K562 (cell line): ENCODE measurements at regions of chr22 and their contacts with region 1.

Region 1: GRCh38 chr22:23240639-23241389 is 60.5 kb downstream of the BCR start:
- DNase-seq: peak; percentile 64 to 89 (median 66)
- ATAC-seq: peak; percentile 36
- H3K4me3 ChIP-seq: no peak overlapping the region
- H3K27ac ChIP-seq: no peak overlapping the region
- H3K4me1 ChIP-seq: peaks cover 22 to 44% of the 10 kb centered on the region in 2 experiments
- H3K27me3 ChIP-seq: no peaks in the 10 kb centered on the region
- CTCF ChIP-seq: no peak
- EP300 ChIP-seq: no peak
- POLR2A ChIP-seq: no peak
- RAD21 ChIP-seq: no peak

Region 2: DNA sequence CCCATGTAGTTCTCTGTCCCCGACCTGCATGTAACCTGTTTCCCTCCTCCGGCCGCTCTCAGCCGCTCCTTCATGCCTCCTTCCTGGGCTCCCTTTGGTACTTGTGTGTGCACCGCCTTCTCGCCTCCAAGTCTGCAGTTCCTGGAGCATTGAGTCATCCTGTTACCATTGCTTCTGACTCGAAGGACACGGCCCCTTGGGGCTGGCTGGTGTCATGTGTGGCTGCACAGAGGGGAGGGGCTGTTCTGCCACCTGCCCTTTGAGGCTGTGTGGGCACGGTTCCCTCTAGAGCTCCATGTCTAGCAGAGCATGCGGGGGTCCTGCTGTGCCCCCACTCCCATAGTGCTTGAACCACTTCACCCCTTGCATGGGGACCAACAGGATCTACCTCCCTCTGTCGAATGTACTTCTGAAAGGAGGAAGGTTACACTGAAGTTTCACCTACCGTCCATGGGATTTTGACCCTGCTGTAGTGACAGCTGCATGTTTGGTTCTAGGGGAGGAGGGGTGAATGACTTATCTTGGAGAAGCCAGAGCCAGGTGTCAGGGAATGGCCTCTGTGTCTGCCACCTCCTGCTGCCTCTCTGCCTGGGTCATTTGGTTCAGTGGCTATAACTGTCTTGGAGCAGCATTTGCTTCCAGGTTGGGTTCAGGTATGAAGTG is 20.9 kb before region 1 on chr22:
- CTCF ChIA-PET with region 1: no interaction called
- POLR2A ChIA-PET with region 1: interaction called, 3,476 read pairs
- in situ Hi-C with region 1: no loop called
- intact Hi-C with region 1: no loop called
- DNase-seq: peak in 2 of 4 experiments; percentile 90 to 94
- ATAC-seq: peak; percentile 54
- H3K4me3 ChIP-seq: no peak overlapping the region
- H3K27ac ChIP-seq: peak overlapping the region; percentile 6; the same call in 2 of the 3 replicates
- H3K4me1 ChIP-seq: peaks cover 77 to 78% of the 10 kb centered on the region in 2 experiments
- H3K27me3 ChIP-seq: no peaks in the 10 kb centered on the region
- CTCF ChIP-seq: no peak
- EP300 ChIP-seq: no peak
- POLR2A ChIP-seq: no peak
- RAD21 ChIP-seq: no peak

Region 3: GRCh38 chr22:23225724-23226496 is 14.9 kb before region 1 on chr22:
- CTCF ChIA-PET with region 1: no interaction called
- POLR2A ChIA-PET with region 1: interaction called, 3,476 read pairs
- in situ Hi-C with region 1: no loop called
- intact Hi-C with region 1: loop called (anchors 2 kb)
- DNase-seq: peak in 3 of 4 experiments; percentile 59 to 72 (median 59)
- ATAC-seq: no peak
- H3K4me3 ChIP-seq: no peak overlapping the region
- H3K27ac ChIP-seq: no peak overlapping the region
- H3K4me1 ChIP-seq: peaks cover 48 to 50% of the 10 kb centered on the region in 2 experiments
- H3K27me3 ChIP-seq: no peaks in the 10 kb centered on the region
- CTCF ChIP-seq: no peak
- EP300 ChIP-seq: no peak
- POLR2A ChIP-seq: no peak
- RAD21 ChIP-seq: no peak

Region 4: DNA sequence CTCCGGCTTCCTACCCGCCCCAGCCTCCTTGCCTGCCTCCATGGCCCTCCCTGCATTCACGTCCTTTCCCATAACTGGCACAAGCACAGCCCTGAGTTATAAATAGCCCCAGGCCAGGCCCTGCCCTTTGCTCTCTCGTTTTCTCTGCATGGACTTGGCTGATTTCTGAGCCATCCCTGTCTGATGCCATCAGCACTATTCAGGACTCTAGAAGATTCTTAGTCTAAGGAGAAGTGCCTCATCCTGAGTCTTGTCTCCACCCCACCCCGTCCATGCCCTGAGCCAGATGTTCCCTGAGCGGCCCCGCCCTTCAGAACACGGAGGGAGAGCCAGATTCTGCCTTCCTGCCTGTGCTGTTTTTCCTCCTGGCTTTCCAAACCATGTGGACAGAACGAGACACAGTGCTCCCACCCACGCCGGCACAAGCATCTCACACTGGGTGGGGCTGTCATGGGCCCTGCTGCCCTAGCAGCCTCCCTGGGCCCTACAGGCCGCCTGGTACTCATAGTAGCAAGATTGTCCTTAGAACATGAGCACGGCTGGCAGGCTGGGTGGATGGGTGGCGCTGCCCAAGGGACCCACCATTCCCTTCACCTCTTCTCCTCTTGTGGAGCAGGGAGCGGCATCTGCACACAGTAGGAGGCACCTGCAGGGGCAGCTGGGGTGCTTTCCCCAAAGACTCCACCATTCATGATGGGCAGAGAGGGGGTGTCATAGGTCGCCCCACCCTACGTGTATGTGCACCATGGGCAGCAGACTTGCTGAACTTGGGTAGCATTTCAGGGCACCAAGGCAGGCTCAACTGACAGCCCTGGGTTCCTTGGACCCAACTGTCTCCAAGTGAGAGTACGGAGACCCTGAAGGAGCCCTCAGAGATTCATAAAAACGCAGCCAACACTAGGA is 16.4 kb after region 1 on chr22:
- CTCF ChIA-PET with region 1: no interaction called
- POLR2A ChIA-PET with region 1: interaction called, 351 read pairs
- in situ Hi-C with region 1: no loop called
- intact Hi-C with region 1: no loop called
- DNase-seq: peak in 3 of 4 experiments; percentile 57 to 70 (median 69)
- ATAC-seq: no peak
- H3K4me3 ChIP-seq: no peak overlapping the region
- H3K27ac ChIP-seq: no peak overlapping the region
- H3K4me1 ChIP-seq: peaks cover 0 to 29% of the 10 kb centered on the region in 2 experiments; a peak in 2 of 5 replicates
- H3K27me3 ChIP-seq: no peaks in the 10 kb centered on the region
- CTCF ChIP-seq: no peak
- EP300 ChIP-seq: no peak
- POLR2A ChIP-seq: no peak
- RAD21 ChIP-seq: no peak

Region 5: GRCh38 chr22:23270212-23270733 is 29.5 kb after region 1 on chr22:
- CTCF ChIA-PET with region 1: interaction called, 3 read pairs
- POLR2A ChIA-PET with region 1: interaction called, 11 read pairs
- in situ Hi-C with region 1: no loop called
- intact Hi-C with region 1: no loop called
- DNase-seq: peak in 3 of 4 experiments; percentile 61 to 82 (median 77)
- ATAC-seq: peak; percentile 31
- H3K4me3 ChIP-seq: no peak overlapping the region
- H3K27ac ChIP-seq: no peak overlapping the region
- H3K4me1 ChIP-seq: peaks cover 4 to 34% of the 10 kb centered on the region in 2 experiments; a peak in 4 of 5 replicates
- H3K27me3 ChIP-seq: no peaks in the 10 kb centered on the region
- CTCF ChIP-seq: peak in 2 of 3 experiments; percentile 75 to 87; a peak in 4 of 6 replicates
- EP300 ChIP-seq: no peak
- POLR2A ChIP-seq: no peak
- RAD21 ChIP-seq: peak in 1 of 2 experiments; percentile 82; a peak in 2 of 4 replicates

Region 6: GRCh38 chr22:23376256-23376655 is 135.4 kb after region 1 on chr22:
- CTCF ChIA-PET with region 1: no interaction called
- POLR2A ChIA-PET with region 1: no interaction called
- in situ Hi-C with region 1: no loop called
- intact Hi-C with region 1: no loop called
- DNase-seq: peak; percentile 56 to 65 (median 60)
- ATAC-seq: peak; percentile 94
- H3K4me3 ChIP-seq: no peak overlapping the region
- H3K27ac ChIP-seq: no peak overlapping the region
- H3K4me1 ChIP-seq: peaks cover 0 to 3% of the 10 kb centered on the region in 2 experiments; a peak in 2 of 5 replicates
- H3K27me3 ChIP-seq: peaks cover 0 to 5% of the 10 kb centered on the region in 2 experiments; a peak in 2 of 5 replicates
- CTCF ChIP-seq: peak; percentile 52 to 68 (median 66)
- EP300 ChIP-seq: no peak
- POLR2A ChIP-seq: no peak
- RAD21 ChIP-seq: peak in 1 of 2 experiments; percentile 53; a peak in 2 of 4 replicates